PC-3 (cell line): ENCODE measurements at regions of chr5 and their contacts with region 1.

Region 1: GRCh38 chr5:65760504-65761275 is 38.7 kb downstream of the NLN start:
- DNase-seq: peak; percentile 61
- ATAC-seq: peak; percentile 77
- H3K4me3 ChIP-seq: no peak overlapping the region
- H3K27ac ChIP-seq: no peak overlapping the region
- H3K4me1 ChIP-seq: peaks cover 3% of the 10 kb centered on the region; the same call in 1 of the 2 replicates
- H3K27me3 ChIP-seq: no peaks in the 10 kb centered on the region
- CTCF ChIP-seq: peak; percentile 47

Region 2: GRCh38 chr5:65790371-65791163 is 29.9 kb after region 1 on chr5:
- CTCF ChIA-PET with region 1: interaction called, 12 read pairs
- POLR2A ChIA-PET with region 1: no interaction called
- intact Hi-C with region 1: no loop called
- DNase-seq: no peak
- ATAC-seq: no peak
- H3K4me3 ChIP-seq: no peak overlapping the region
- H3K27ac ChIP-seq: no peak overlapping the region
- H3K4me1 ChIP-seq: no peaks in the 10 kb centered on the region
- H3K27me3 ChIP-seq: no peaks in the 10 kb centered on the region
- CTCF ChIP-seq: no peak

Region 3: DNA sequence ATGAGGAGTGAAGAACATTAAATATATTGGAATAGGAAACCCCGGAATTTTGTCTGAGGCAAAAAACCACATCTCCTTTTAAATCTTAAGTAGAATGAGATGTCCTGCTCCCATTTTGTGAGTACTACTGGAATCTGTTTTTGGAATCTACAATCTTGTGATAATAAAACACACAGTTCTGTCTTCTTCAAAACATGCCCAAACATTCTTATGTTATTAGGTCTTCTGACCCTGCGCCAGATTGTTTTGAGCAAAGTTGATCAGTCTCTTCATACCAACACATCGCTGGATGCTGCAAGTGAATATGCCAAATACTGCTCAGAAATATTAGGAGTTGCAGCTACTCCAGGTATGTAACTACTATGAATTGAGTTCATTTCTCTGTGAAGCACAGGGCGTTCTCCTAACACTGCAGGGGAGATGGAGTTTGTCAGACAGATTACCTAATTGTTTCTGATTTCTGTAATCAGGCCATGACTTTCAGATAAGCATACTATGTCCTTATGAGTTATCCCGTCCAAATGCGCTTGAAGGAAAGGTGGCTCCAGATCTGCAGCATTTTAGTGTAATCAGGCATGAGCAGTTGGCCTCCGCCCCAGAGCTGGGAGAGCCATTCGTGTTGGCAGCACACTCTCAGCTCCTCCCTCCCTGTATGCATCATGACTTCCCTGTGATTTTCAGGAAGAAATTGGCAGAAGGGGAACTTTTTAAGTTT is 49.3 kb after region 1 on chr5:
- CTCF ChIA-PET with region 1: no interaction called
- POLR2A ChIA-PET with region 1: no interaction called
- intact Hi-C with region 1: loop called (anchors 5 kb)
- DNase-seq: peak; percentile 71
- ATAC-seq: peak; percentile 82
- H3K4me3 ChIP-seq: no peak overlapping the region
- H3K27ac ChIP-seq: peak overlapping the region; percentile 97
- H3K4me1 ChIP-seq: peaks cover 42% of the 10 kb centered on the region
- H3K27me3 ChIP-seq: no peaks in the 10 kb centered on the region
- CTCF ChIP-seq: no peak

Region 4: GRCh38 chr5:65861830-65862241 is 101.1 kb after region 1 on chr5:
- CTCF ChIA-PET with region 1: no interaction called
- POLR2A ChIA-PET with region 1: no interaction called
- intact Hi-C with region 1: loop called (anchors 5 kb)
- DNase-seq: peak; percentile 81
- ATAC-seq: peak; percentile 90
- H3K4me3 ChIP-seq: no peak overlapping the region
- H3K27ac ChIP-seq: peak overlapping the region; percentile 97
- H3K4me1 ChIP-seq: peaks cover 40% of the 10 kb centered on the region
- H3K27me3 ChIP-seq: no peaks in the 10 kb centered on the region
- CTCF ChIP-seq: no peak

Region 5: GRCh38 chr5:66074901-66075300 is 314.2 kb after region 1 on chr5:
- CTCF ChIA-PET with region 1: interaction called, 11 read pairs
- POLR2A ChIA-PET with region 1: no interaction called
- intact Hi-C with region 1: no loop called
- DNase-seq: no peak
- ATAC-seq: no peak
- H3K4me3 ChIP-seq: no peak overlapping the region
- H3K27ac ChIP-seq: no peak overlapping the region
- H3K4me1 ChIP-seq: no peaks in the 10 kb centered on the region
- H3K27me3 ChIP-seq: no peaks in the 10 kb centered on the region
- CTCF ChIP-seq: no peak

Region 6: GRCh38 chr5:66144074-66144833 is 383.6 kb after region 1 on chr5 and contains the start of gene SREK1:
- CTCF ChIA-PET with region 1: no interaction called
- POLR2A ChIA-PET with region 1: no interaction called
- intact Hi-C with region 1: loop called (anchors 10 kb)
- DNase-seq: peak; percentile 77
- ATAC-seq: peak; percentile 83
- H3K4me3 ChIP-seq: peak within 1 kb of the TSS; percentile 85
- H3K27ac ChIP-seq: peak within 1 kb of the TSS; percentile 80
- H3K4me1 ChIP-seq: no peaks in the 10 kb centered on the region
- H3K27me3 ChIP-seq: no peaks in the 10 kb centered on the region
- CTCF ChIP-seq: no peak
- total RNA-seq, gene SREK1: 34.8 and 43.1 TPM in 2 replicates